Panc1 (cell line): ENCODE measurements at regions of chr19 and their contacts with region 1.

Region 1: GRCh38 chr19:50922317-50922853 is 11.2 kb upstream of the KLK4 start:
- DNase-seq: no peak
- ATAC-seq: peak; percentile 100
- H3K4me3 ChIP-seq: no peak overlapping the region
- H3K27ac ChIP-seq: no peak overlapping the region
- H3K4me1 ChIP-seq: no peaks in the 10 kb centered on the region; the same call in 1 of the 2 replicates
- H3K27me3 ChIP-seq: peaks cover 5% of the 10 kb centered on the region; the same call in 1 of the 2 replicates
- CTCF ChIP-seq: peak; percentile 84

Region 2: GRCh38 chr19:50794439-50795237 is 127.7 kb before region 1 on chr19:
- CTCF ChIA-PET with region 1: interaction called, 4 read pairs
- POLR2A ChIA-PET with region 1: interaction called, 5 read pairs
- in situ Hi-C with region 1: no loop called
- intact Hi-C with region 1: loop called (anchors 5 kb)
- DNase-seq: no peak
- ATAC-seq: peak; percentile 67
- H3K4me3 ChIP-seq: no peak overlapping the region
- H3K27ac ChIP-seq: no peak overlapping the region
- H3K4me1 ChIP-seq: no peaks in the 10 kb centered on the region
- H3K27me3 ChIP-seq: no peaks in the 10 kb centered on the region
- CTCF ChIP-seq: peak; percentile 59; the same call in 1 of the 2 replicates

Region 3: GRCh38 chr19:51097166-51097738 is 174.9 kb after region 1 on chr19:
- CTCF ChIA-PET with region 1: no interaction called
- POLR2A ChIA-PET with region 1: no interaction called
- in situ Hi-C with region 1: no loop called
- intact Hi-C with region 1: loop called (anchors 10 kb)
- DNase-seq: no peak
- ATAC-seq: peak; percentile 77; the same call in 1 of the 2 replicates
- H3K4me3 ChIP-seq: no peak overlapping the region
- H3K27ac ChIP-seq: no peak overlapping the region
- H3K4me1 ChIP-seq: no peaks in the 10 kb centered on the region; the same call in 1 of the 2 replicates
- H3K27me3 ChIP-seq: no peaks in the 10 kb centered on the region
- CTCF ChIP-seq: peak; percentile 77